MCF 10A (cell line): ENCODE measurements at regions of chr7 and their contacts with region 1.

Region 1: DNA sequence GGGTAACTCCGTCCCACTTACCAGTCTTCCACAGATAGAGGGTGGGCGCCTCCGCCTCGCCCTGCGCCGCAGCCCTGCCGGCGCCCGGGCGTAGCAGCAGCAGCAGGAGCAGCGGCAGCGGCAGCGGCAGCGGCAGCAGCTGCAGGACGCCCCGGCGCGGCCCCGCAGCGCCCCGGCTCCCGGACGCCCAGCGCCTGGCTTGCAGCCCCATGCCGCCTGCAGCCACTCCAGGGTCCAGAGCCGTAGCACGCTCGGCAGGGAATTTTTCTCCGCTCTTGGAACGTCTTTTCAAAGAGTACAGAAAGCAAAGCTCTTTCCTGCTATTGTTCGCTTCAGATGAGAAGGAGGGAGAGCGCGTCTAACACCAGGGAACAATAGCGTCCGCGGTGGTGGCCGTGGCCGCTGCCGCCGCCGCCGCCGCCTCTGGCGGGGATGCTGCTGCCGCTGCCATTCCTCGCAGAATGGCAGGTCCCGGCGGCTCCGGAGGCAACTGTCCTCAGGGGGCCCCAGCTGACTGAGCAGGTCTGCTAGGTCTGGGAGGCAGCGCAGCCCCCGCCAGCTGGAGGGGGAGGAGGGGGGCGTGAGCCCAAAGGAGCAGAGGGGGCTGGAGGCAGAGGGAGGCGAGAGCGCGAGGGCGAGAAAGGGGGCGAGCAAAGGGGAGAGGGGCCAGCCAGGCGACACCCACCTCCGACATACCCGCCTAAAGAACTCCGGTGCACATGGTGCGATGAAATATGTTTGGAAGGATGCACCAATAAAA is at the start of gene THSD7A:
- DNase-seq: peak; percentile 18
- H3K4me3 Mint-ChIP-seq: peak within 1 kb of the TSS; percentile 68
- H3K27ac Mint-ChIP-seq: no peak within 1 kb of the TSS
- H3K4me1 Mint-ChIP-seq: no peaks in the 10 kb centered on the region
- H3K27me3 Mint-ChIP-seq: peaks cover 46% of the 10 kb centered on the region
- CTCF ChIP-seq: no peak
- total RNA-seq, gene THSD7A: not detected in 2 replicates

Region 2: GRCh38 chr7:11373546-11374142 is 458.3 kb before region 1 on chr7:
- CTCF ChIA-PET with region 1: no interaction called
- POLR2A ChIA-PET with region 1: no interaction called
- intact Hi-C with region 1: loop called (anchors 10 kb)
- DNase-seq: peak; percentile 33
- H3K4me3 Mint-ChIP-seq: no peak overlapping the region
- H3K27ac Mint-ChIP-seq: no peak overlapping the region
- H3K4me1 Mint-ChIP-seq: no peaks in the 10 kb centered on the region
- H3K27me3 Mint-ChIP-seq: peaks cover 39% of the 10 kb centered on the region
- CTCF ChIP-seq: peak; percentile 45

Region 3: DNA sequence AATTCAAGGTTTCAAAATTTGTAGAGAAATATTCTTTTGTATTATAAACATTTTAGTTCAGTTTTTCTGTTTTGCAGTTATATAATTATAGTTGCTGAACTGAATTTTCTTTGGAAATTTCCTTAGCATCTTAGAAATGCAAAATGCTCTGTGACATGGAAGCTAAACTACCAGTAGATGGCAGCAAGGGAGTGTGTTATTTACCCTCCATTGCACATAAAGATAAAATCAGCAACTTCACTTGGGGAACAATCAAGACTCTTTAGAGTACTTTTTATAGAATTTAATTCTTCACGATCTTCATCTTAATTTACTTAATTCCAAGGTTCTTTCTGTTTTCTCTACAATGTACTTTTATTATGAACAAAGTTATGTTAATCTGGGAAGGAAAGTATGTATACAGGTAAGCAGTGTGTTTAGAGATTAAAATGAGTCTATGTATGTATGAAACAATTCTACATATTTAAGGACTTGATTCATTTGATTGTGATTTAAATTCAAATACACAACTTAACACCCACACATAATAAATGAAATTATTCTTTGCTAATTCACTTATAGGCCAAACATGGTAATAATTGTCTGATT is 404.1 kb before region 1 on chr7:
- CTCF ChIA-PET with region 1: interaction called, 6 read pairs
- POLR2A ChIA-PET with region 1: interaction called, 5 read pairs
- intact Hi-C with region 1: loop called (anchors 1 kb)
- DNase-seq: peak; percentile 67
- H3K4me3 Mint-ChIP-seq: no peak overlapping the region
- H3K27ac Mint-ChIP-seq: no peak overlapping the region
- H3K4me1 Mint-ChIP-seq: no peaks in the 10 kb centered on the region
- H3K27me3 Mint-ChIP-seq: no peaks in the 10 kb centered on the region
- CTCF ChIP-seq: peak; percentile 59

Region 4: DNA sequence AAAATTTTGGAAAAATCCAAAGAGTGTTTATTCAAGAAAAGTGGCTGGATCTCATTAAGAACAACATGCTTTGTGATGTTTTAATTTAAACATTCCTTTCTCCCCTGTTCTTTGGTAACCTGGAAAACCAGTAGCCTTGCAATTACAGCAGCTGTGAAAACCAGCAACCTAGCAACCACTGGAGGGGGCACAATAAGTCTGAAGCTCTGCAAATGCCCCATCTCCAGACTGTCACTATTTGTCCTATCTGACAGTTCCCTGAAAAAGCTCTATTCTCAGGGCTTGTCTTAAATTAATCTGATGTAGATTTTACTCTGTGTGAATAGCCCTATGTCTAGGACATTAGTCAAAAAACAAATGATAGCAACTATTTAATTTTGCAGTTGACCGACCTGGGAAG is 137.7 kb after region 1 on chr7:
- CTCF ChIA-PET with region 1: no interaction called
- POLR2A ChIA-PET with region 1: no interaction called
- intact Hi-C with region 1: no loop called
- DNase-seq: no peak
- H3K4me3 Mint-ChIP-seq: no peak overlapping the region
- H3K27ac Mint-ChIP-seq: no peak overlapping the region
- H3K4me1 Mint-ChIP-seq: no peaks in the 10 kb centered on the region
- H3K27me3 Mint-ChIP-seq: no peaks in the 10 kb centered on the region
- CTCF ChIP-seq: no peak

Region 5: DNA sequence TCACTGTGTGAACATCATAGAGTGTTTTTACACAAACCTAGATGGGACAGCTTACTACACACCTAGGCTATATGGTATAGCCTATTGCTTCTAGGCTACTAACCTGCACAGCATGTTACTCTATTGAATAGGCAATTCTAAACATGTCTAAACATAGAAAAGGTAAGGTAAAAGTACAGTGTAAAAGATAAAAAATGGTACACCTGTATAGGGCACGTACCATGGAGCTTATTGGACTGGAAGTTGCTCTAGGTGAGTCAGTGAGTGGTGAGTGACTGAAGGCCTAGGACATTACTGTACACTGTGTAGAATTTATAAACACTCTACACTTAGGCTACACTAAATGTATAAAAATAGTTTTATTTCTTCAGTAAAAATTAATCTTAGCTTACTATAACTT is 182.1 kb after region 1 on chr7:
- CTCF ChIA-PET with region 1: no interaction called
- POLR2A ChIA-PET with region 1: no interaction called
- intact Hi-C with region 1: no loop called
- DNase-seq: no peak
- H3K4me3 Mint-ChIP-seq: no peak overlapping the region
- H3K27ac Mint-ChIP-seq: no peak overlapping the region
- H3K4me1 Mint-ChIP-seq: no peaks in the 10 kb centered on the region
- H3K27me3 Mint-ChIP-seq: no peaks in the 10 kb centered on the region
- CTCF ChIP-seq: no peak

Region 6: GRCh38 chr7:12067141-12067831 is 235.4 kb after region 1 on chr7:
- CTCF ChIA-PET with region 1: interaction called, 6 read pairs
- POLR2A ChIA-PET with region 1: no interaction called
- intact Hi-C with region 1: loop called (anchors 5 kb)
- DNase-seq: peak; percentile 75
- H3K4me3 Mint-ChIP-seq: no peak overlapping the region
- H3K27ac Mint-ChIP-seq: no peak overlapping the region
- H3K4me1 Mint-ChIP-seq: peaks cover 12% of the 10 kb centered on the region
- H3K27me3 Mint-ChIP-seq: no peaks in the 10 kb centered on the region
- CTCF ChIP-seq: peak; percentile 59

Region 7: GRCh38 chr7:12337095-12337494 is 505.2 kb after region 1 on chr7:
- CTCF ChIA-PET with region 1: no interaction called
- POLR2A ChIA-PET with region 1: no interaction called
- intact Hi-C with region 1: no loop called
- DNase-seq: no peak
- H3K4me3 Mint-ChIP-seq: no peak overlapping the region
- H3K27ac Mint-ChIP-seq: no peak overlapping the region
- H3K4me1 Mint-ChIP-seq: no peaks in the 10 kb centered on the region
- H3K27me3 Mint-ChIP-seq: no peaks in the 10 kb centered on the region
- CTCF ChIP-seq: no peak